ENCODE measurements at regions of chr9 and their contacts with region 1.

Region 1: GRCh38 chr9:127154390-127155191 is 32.2 kb upstream of the ANGPTL2 start:
- DNase-seq: peak; percentile 70
- H3K4me3 Mint-ChIP-seq: no peak overlapping the region
- H3K27ac Mint-ChIP-seq: peak overlapping the region; percentile 9
- H3K4me1 Mint-ChIP-seq: peaks cover 21% of the 10 kb centered on the region
- H3K27me3 Mint-ChIP-seq: peaks cover 9% of the 10 kb centered on the region

Region 2: DNA sequence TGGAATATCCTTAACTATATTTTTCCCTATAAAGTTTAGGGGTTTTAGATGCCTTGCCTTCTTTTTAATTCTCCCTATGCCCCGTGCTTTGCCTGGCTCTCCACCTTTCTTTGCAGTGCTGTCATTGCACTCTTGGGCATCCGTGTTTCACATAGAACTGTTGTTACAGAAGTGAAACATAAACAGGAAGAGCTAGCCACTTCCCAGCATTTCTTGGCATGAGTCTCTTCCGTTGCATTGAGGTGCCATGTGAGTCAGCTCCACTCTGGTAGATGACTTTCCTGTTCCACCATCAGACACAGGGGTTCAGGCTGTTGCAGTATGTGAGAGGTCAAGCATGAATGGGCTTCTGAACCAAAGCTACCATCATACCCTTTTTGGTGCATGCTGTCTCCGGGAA is 105.5 kb before region 1 on chr9:
- CTCF ChIA-PET with region 1: interaction called, 3 read pairs
- POLR2A ChIA-PET with region 1: no interaction called
- intact Hi-C with region 1: loop called (anchors 1 kb)
- DNase-seq: peak; percentile 66
- H3K4me3 Mint-ChIP-seq: no peak overlapping the region
- H3K27ac Mint-ChIP-seq: peak overlapping the region; percentile 8
- H3K4me1 Mint-ChIP-seq: peaks cover 27% of the 10 kb centered on the region
- H3K27me3 Mint-ChIP-seq: no peaks in the 10 kb centered on the region